ENCODE measurements at regions of chr5 and their contacts with region 1.

Region 1: DNA sequence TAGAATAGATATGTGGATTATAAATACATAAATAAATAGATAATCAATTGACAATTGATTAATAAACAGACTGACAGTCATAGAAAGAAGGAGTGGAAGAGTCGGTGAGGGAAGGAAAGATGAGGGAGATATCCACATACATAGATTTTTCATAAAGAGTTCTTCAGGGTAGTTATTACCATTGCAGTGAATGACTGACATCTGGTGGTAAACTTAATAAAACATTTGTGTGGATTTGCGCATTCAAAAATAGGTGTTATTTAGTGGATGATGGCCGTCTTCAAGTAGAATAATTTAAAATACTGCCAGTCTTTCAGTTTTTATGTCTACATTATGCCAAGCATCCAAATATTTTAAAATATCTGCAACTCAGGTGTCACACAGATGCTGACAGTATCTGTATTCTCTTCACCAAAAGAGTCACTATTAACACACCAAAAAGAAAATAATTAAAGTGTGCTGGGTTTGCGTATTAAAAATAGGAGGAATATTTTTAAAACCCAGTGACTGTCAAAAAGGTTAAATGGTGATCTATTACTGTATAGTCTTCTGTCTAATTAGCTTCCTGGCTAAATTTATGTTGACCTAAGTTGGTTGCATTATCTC is 78.8 kb downstream of the GIN1 start:
- DNase-seq: no peak
- ATAC-seq: peak in 1 of 4 donors; percentile 72
- H3K4me3 ChIP-seq: no peak overlapping the region
- H3K27ac ChIP-seq: no peak overlapping the region
- H3K4me1 ChIP-seq: no peaks in the 10 kb centered on the region
- H3K27me3 ChIP-seq: no peaks in the 10 kb centered on the region
- CTCF ChIP-seq: peak; percentile 72

Region 2: DNA sequence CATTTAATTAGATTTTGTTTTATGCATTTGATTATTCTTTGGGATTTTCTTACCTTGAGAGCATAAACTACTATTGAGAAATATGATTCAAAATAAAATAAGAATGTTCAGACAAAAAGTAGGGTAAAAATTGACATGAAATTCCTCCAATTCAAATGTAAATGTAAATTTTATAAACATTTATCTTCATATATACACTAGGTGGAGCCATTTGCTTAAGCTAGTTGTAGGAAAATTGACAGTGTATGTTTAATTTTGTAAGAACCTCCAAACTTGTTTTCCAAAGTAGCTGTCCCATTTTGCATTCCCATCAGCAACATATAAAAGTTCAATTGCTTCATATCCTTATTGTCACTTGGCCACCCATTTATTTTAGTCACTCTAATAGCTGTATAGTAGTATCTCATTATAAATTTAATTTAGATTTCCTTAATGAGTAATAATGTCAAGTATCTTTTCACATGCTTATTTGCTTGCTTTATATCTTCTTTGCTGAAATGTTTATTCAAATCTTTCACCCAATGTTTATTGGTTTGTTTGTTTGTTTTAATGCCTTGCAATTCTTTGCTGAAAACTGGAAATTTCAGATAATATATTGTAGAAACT is 504.7 kb before region 1 on chr5:
- intact Hi-C with region 1: loop called (anchors 5 kb)
- DNase-seq: no peak
- ATAC-seq: no peak
- H3K4me3 ChIP-seq: no peak overlapping the region
- H3K27ac ChIP-seq: no peak overlapping the region
- H3K4me1 ChIP-seq: no peaks in the 10 kb centered on the region
- H3K27me3 ChIP-seq: no peaks in the 10 kb centered on the region
- CTCF ChIP-seq: peak; percentile 35

Region 3: DNA sequence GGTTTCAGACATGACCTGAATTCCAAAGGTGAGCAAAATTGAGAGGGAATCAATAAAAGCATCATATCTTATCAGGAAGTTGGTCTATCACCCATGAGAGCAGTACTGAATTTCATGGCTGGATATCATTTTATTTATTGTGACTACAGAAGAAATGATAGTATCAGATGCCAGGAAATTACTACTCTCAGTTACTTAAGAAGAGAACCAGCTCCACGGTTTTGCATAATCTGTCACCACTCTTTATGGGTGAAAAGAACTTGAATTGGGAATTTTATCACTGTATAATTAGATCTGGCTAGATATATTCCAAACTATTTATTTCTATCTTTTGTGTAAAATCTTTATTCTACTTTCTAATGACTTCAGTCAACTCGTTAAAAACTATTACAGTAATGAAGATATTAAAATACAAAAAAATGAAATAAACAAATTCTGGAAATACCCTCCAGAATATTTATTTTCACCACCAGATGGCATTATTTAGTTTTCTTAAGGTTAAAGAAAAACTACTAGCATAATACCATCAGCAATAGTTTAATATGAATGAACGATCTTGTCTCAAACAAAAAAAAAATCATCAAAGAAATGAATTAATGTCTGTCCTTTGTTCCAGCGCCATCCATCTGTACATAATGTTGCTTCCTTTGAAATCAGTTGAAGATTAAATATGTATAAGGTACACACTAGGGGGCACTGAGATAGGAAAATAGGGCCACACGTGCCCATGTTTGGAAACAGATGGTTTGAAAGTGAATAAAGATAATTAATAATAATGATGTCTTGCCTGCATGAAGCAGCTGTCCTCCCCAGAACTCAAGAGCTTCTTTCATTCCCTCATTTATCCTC is 457.7 kb before region 1 on chr5:
- intact Hi-C with region 1: loop called (anchors 2 to 5 kb)
- DNase-seq: no peak
- ATAC-seq: no peak
- H3K4me3 ChIP-seq: no peak overlapping the region
- H3K27ac ChIP-seq: no peak overlapping the region
- H3K4me1 ChIP-seq: no peaks in the 10 kb centered on the region
- H3K27me3 ChIP-seq: no peaks in the 10 kb centered on the region
- CTCF ChIP-seq: peak; percentile 46

Region 4: DNA sequence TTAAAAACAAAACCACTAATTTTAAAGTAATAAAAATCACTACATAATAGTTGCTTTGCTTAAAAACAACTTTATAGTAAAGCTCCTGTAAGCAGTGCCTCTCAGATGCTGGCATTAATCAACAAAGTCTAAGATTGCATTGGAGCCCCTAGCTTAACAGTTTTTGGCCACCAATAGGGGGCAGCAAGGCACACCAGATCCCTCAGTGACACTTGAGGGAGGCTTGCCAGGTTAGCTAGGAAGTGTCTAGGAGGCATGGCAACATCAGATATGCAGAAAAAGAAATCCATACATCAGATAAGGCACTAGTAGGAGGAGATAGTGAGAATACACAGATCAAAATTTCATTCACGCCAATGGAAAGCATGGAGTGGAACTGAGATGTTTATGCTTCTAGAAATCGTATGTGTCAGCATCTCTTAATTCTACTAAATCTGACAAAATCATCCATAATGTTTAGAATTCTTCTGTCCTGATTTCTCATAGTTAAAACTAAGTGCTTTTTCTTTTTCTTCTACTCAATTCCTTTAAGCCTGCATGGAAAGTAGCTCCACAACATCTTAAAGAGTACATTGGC is 359.7 kb before region 1 on chr5:
- intact Hi-C with region 1: loop called (anchors 2 kb)
- DNase-seq: peak; percentile 44 to 75
- ATAC-seq: peak; percentile 75 to 95 (median 82)
- H3K4me3 ChIP-seq: no peak overlapping the region
- H3K27ac ChIP-seq: no peak overlapping the region
- H3K4me1 ChIP-seq: no peaks in the 10 kb centered on the region
- H3K27me3 ChIP-seq: no peaks in the 10 kb centered on the region
- CTCF ChIP-seq: peak; percentile 82

Measured in psoas muscle (tissue), 8 donors.